ENCODE measurements at regions of chr12 and their contacts with region 1.

Region 1: GRCh38 chr12:109844983-109845823 is 12.0 kb upstream of the TRPV4 start:
- DNase-seq: peak; percentile 90
- H3K4me3 Mint-ChIP-seq: no peak overlapping the region
- H3K27ac Mint-ChIP-seq: no peak overlapping the region
- H3K4me1 Mint-ChIP-seq: peaks cover 10% of the 10 kb centered on the region
- H3K27me3 Mint-ChIP-seq: peaks cover 4% of the 10 kb centered on the region

Region 2: GRCh38 chr12:109804820-109805761 is 40.1 kb before region 1 on chr12:
- CTCF ChIA-PET with region 1: interaction called, 56 read pairs
- DNase-seq: peak; percentile 79
- H3K4me3 Mint-ChIP-seq: no peak overlapping the region
- H3K27ac Mint-ChIP-seq: no peak overlapping the region
- H3K4me1 Mint-ChIP-seq: no peaks in the 10 kb centered on the region
- H3K27me3 Mint-ChIP-seq: peaks cover 8% of the 10 kb centered on the region

Region 3: DNA sequence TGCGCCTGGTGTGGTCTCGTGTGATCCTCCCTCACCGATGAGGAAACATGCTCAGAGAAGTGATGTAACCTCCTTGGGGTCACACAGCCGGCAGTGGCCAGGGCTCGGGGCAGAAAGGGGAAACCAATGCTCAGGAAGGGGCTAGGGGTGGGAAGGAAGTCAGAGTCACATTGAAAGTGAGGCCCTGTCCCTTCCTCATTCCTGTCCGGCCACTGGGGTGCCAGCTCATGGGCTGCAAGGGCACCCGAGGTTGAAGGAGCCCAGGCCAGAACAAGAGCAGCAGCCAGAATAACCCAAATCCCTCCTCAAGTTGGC is 17.0 kb before region 1 on chr12:
- CTCF ChIA-PET with region 1: interaction called, 29 read pairs
- DNase-seq: no peak
- H3K4me3 Mint-ChIP-seq: no peak overlapping the region
- H3K27ac Mint-ChIP-seq: no peak overlapping the region
- H3K4me1 Mint-ChIP-seq: no peaks in the 10 kb centered on the region
- H3K27me3 Mint-ChIP-seq: peaks cover 46% of the 10 kb centered on the region

Region 4: DNA sequence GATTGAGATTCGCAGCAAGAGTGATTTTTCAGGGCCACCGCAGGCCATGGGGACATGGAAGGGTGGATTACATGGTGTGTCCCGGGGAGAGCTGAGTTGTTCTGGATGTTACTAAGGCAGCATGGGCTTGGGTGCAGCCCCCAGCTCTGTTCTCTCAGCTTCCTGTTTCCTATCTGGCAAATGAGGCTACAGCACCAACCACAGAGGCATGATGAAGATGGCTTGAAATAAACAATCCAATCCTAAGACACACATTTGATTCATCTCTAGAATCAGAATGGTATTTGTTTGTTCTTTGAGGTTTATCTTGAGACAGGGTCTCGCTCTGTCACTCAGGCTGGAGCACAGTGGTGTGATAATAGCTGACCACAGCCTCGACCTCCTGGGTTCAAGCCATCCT is 13.6 kb after region 1 on chr12:
- CTCF ChIA-PET with region 1: interaction called, 60 read pairs
- DNase-seq: no peak
- H3K4me3 Mint-ChIP-seq: no peak overlapping the region
- H3K27ac Mint-ChIP-seq: no peak overlapping the region
- H3K4me1 Mint-ChIP-seq: peaks cover 14% of the 10 kb centered on the region
- H3K27me3 Mint-ChIP-seq: no peaks in the 10 kb centered on the region